Gastrocnemius medialis (tissue), 4 donors: ENCODE measurements at regions of chr9 and their contacts with region 1.

Region 1: DNA sequence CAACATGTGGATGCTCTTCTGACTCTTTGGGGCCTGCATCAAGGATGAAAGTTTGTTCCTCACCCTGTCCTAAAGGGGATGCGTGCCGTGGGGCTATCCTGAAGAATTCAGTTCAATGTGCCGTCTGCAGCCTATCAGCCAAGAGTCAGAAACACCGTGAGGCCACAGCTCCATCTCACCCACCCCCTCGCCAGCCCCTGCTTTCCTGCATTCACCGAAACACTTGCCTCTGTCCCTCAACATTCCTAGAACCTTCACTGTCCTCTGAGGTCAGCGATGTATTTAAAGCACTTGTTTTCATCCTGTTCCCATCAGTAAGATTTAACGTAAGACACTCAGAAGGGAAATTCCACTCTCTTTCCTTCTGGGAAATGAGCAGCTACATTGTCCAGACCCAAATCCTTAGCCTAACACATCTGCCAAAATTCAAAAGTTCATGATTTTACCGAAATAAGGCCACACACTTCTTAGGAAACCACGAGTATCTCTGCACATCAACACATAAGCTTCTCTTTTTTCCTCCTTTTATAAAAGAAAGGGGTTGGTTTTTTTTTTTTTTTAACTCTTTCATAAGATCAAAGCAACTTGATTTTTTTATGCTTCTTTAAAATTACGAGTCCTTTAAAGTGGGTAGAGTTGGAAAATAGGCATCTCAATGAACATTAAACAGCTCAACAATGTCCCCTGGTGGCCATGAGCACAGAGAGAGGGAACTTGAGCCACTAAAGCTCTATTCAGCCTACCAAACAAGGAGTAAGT is 100.7 kb downstream of the SUSD1 start:
- DNase-seq: peak; percentile 29 to 38
- ATAC-seq: peak; percentile 81 to 86
- H3K4me3 ChIP-seq: peak overlapping the region in 2 of 4 donors; percentile 5 to 30
- H3K27ac ChIP-seq: peak overlapping the region; percentile 61 to 68 (median 64)
- H3K4me1 ChIP-seq: peaks cover 8 to 11% of the 10 kb centered on the region in 2 donors
- H3K27me3 ChIP-seq: no peaks in the 10 kb centered on the region
- CTCF ChIP-seq: peak; percentile 85 to 96 (median 88)
- POLR2A ChIP-seq: no peak

Region 2: GRCh38 chr9:111597817-111598729 is 476.4 kb before region 1 on chr9:
- in situ Hi-C with region 1: loop called in 1 of 4 experiments (anchors 25 kb)
- intact Hi-C with region 1: loop called (anchors 2 kb)
- DNase-seq: peak; percentile 35 to 54
- ATAC-seq: peak; percentile 61 to 62
- H3K4me3 ChIP-seq: peak overlapping the region; percentile 66 to 89 (median 80)
- H3K27ac ChIP-seq: peak overlapping the region; percentile 69 to 81 (median 78)
- H3K4me1 ChIP-seq: peaks cover 0 to 9% of the 10 kb centered on the region in 2 donors
- H3K27me3 ChIP-seq: no peaks in the 10 kb centered on the region
- CTCF ChIP-seq: peak; percentile 10 to 63 (median 40)
- POLR2A ChIP-seq: no peak

Region 3: GRCh38 chr9:111759762-111760639 is 314.4 kb before region 1 on chr9:
- in situ Hi-C with region 1: loop called (anchors 5 kb)
- intact Hi-C with region 1: loop called (anchors 1 kb)
- DNase-seq: no peak
- ATAC-seq: peak; percentile 89 to 90
- H3K4me3 ChIP-seq: no peak overlapping the region
- H3K27ac ChIP-seq: no peak overlapping the region
- H3K4me1 ChIP-seq: peaks cover 0 to 4% of the 10 kb centered on the region in 2 donors
- H3K27me3 ChIP-seq: no peaks in the 10 kb centered on the region
- CTCF ChIP-seq: peak; percentile 31 to 75 (median 59)
- POLR2A ChIP-seq: no peak

Region 4: GRCh38 chr9:111828193-111828592 is 246.2 kb before region 1 on chr9:
- in situ Hi-C with region 1: loop called in 2 of 4 experiments (anchors 10 to 25 kb)
- intact Hi-C with region 1: loop called (anchors 1 kb)
- DNase-seq: no peak
- ATAC-seq: no peak
- H3K4me3 ChIP-seq: no peak overlapping the region
- H3K27ac ChIP-seq: no peak overlapping the region
- H3K4me1 ChIP-seq: no peaks in the 10 kb centered on the region
- H3K27me3 ChIP-seq: no peaks in the 10 kb centered on the region
- CTCF ChIP-seq: peak in 2 of 5 experiments; percentile 12 to 16
- POLR2A ChIP-seq: no peak

Region 5: GRCh38 chr9:111896353-111896958 is 178.0 kb before region 1 on chr9 and contains the start of gene UGCG:
- in situ Hi-C with region 1: loop called in 3 of 4 experiments (anchors 10 kb)
- intact Hi-C with region 1: loop called (anchors 2 kb)
- DNase-seq: peak; percentile 74 to 81
- ATAC-seq: peak; percentile 87 to 91
- H3K4me3 ChIP-seq: peak within 1 kb of the TSS; percentile 73 to 93 (median 88)
- H3K27ac ChIP-seq: peak within 1 kb of the TSS; percentile 88 to 96 (median 92)
- H3K4me1 ChIP-seq: peaks cover 37 to 42% of the 10 kb centered on the region in 2 donors
- H3K27me3 ChIP-seq: no peaks in the 10 kb centered on the region
- CTCF ChIP-seq: no peak
- POLR2A ChIP-seq: peak; percentile 96 to 97
- total RNA-seq, gene UGCG: 9.1 to 18.5 (median 12.1) TPM

Region 6: GRCh38 chr9:111909441-111909840 is 165.0 kb before region 1 on chr9:
- in situ Hi-C with region 1: loop called in 1 of 4 experiments (anchors 10 kb)
- intact Hi-C with region 1: no loop called
- DNase-seq: no peak
- ATAC-seq: no peak
- H3K4me3 ChIP-seq: no peak overlapping the region
- H3K27ac ChIP-seq: no peak overlapping the region
- H3K4me1 ChIP-seq: peaks cover 16 to 43% of the 10 kb centered on the region in 2 donors
- H3K27me3 ChIP-seq: no peaks in the 10 kb centered on the region
- CTCF ChIP-seq: no peak
- POLR2A ChIP-seq: no peak

Region 7: DNA sequence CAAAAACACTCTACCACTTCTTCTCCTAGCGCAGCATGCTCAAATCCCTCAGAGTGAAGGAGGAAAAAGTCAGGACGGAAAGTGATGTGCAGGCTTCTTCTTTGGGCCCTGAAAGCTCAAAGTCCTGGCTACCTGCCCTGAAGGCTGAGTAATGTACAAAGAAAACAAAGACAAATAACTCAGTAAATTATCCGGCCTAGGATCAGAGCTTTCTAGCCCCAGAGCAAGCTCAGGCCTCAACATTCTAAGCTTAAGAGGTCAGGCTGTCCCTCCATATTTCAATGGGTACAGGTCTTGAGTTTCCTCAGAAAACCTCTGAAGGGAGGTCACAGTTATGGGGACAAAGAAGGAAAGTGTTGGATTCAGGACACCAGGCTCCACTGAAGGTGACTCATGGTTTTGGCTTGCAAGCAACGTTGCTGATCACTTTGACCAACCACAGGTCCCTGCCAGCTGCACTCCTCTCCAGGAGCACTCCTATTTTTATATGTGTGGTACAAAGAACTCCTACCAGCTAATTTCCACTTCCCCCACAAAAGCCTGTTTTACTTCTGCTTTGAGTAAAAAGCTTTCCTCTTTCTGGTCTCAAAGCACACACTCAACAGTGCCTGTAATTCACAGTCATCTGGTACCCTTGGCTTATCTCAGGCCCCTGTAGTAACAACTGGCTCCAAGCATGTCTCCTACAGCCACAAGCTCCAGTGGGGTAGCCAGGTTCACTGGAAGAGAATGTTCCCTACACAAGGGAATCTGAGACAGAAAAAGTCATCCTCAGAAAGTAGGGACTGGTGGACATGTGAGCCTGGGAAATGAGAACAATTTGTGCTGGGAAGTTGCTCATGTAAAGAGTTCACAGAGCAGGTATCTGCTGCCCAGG is 62.2 kb before region 1 on chr9:
- in situ Hi-C with region 1: no loop called
- intact Hi-C with region 1: loop called (anchors 5 kb)
- DNase-seq: peak; percentile 62 to 79
- ATAC-seq: peak; percentile 92 to 93
- H3K4me3 ChIP-seq: no peak overlapping the region
- H3K27ac ChIP-seq: peak overlapping the region; percentile 59 to 85 (median 80)
- H3K4me1 ChIP-seq: peaks cover 18 to 25% of the 10 kb centered on the region in 2 donors
- H3K27me3 ChIP-seq: no peaks in the 10 kb centered on the region
- CTCF ChIP-seq: no peak
- POLR2A ChIP-seq: peak in 1 of 2 donors; percentile 17